HCT116 (cell line): ENCODE measurements at regions of chr17 and their contacts with region 1.

Region 1: DNA sequence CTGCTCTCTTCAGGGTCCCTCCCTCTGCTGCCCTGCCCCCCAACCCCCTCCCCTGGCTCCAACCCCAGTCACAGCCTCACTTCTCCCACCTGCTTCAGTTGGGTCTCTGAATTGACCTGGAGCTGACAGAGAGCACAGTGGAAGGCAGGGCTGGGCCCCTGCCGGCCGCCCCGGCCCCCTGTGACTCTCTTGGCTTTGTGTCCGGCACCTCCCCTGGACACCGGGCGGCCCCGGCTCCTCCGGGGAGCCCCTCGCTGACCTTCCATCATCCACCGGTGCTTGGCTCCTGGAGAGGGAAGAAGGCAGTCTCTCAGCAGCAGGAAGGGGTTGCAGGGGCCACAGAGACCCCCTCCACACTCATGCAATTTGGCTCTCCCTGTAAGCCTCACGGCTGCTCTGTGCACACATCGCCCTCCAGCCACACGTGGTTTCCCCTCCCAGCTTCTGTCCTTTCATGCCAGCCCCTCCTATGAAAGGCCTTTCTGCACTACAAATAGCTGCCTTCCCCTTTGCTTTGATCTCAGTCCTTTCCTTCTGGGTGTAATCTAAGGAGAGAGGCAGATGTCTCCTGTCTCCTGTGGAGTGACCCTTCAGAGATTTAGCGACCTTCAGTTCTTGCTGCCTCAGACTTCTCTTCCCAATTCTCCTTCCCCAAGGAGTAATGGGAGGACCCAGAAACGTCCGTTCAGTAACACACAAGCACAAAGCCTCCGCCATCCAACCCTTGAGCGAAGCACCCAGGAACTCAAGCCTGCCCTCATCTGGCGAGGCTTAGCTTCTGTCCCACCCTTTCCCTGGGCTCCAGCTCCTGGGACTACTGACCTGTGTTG is 8.3 kb downstream of the NKIRAS2 start:
- DNase-seq: peak; percentile 39
- ATAC-seq: peak; percentile 77
- H3K4me3 ChIP-seq: no peak overlapping the region
- H3K27ac ChIP-seq: no peak overlapping the region
- H3K4me1 ChIP-seq: peaks cover 15 to 32% of the 10 kb centered on the region in 2 experiments
- H3K27me3 ChIP-seq: no peaks in the 10 kb centered on the region
- CTCF ChIP-seq: peak; percentile 47 to 68 (median 56); a peak in 5 of 6 replicates
- POLR2A ChIP-seq: no peak
- RAD21 ChIP-seq: peak; percentile 36

Region 2: GRCh38 chr17:41403798-41404671 is 624.1 kb before region 1 on chr17:
- CTCF ChIA-PET with region 1: no interaction called
- POLR2A ChIA-PET with region 1: no interaction called
- RAD21 ChIA-PET with region 1: no interaction called
- intact Hi-C with region 1: no loop called
- DNase-seq: peak; percentile 99
- ATAC-seq: peak; percentile 84
- H3K4me3 ChIP-seq: no peak overlapping the region
- H3K27ac ChIP-seq: peak overlapping the region; percentile 78
- H3K4me1 ChIP-seq: peaks cover 43 to 73% of the 10 kb centered on the region in 2 experiments
- H3K27me3 ChIP-seq: no peaks in the 10 kb centered on the region
- CTCF ChIP-seq: no peak
- POLR2A ChIP-seq: no peak
- RAD21 ChIP-seq: peak; percentile 56

Region 3: DNA sequence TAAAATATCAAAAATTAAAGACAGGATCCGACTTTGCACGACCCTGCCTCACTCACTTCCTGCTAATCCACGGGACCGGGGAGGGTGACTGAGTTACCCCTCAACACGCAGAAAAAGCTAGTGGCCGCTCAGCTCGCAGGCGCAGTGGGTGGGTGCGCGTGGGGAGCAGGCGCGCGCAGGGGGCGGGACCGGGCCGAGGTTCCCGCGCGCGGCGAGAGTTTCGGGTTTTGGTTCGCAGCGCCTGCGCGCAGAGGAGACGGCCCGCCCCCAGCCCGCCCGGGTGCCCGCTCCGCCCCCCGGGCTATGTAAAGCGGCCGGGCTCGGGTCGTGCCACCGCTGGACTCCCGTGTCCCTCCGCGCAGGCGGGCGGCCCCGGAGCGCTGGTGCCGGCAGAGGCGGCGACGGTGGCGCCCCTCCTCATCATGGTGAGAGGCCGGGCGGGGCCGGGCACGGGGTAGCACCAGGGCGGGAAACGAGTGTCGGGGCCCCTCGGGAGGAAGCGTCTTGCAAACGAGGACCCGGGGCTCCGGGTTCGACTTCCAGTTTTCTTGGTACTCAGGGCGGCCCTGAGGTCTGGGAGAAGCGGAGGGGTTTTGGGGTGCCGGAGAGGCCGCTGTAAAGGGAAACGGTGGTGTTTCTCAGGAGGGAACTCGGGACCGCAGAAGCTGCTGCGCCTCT is 61.6 kb before region 1 on chr17 and contains the start of gene CNP:
- CTCF ChIA-PET with region 1: interaction called, 15 read pairs
- POLR2A ChIA-PET with region 1: no interaction called
- RAD21 ChIA-PET with region 1: no interaction called
- intact Hi-C with region 1: no loop called
- DNase-seq: peak; percentile 73
- ATAC-seq: peak; percentile 76
- H3K4me3 ChIP-seq: peak within 1 kb of the TSS; percentile 54 to 77
- H3K27ac ChIP-seq: peak within 1 kb of the TSS; percentile 73
- H3K4me1 ChIP-seq: peaks cover 7 to 22% of the 10 kb centered on the region in 2 experiments
- H3K27me3 ChIP-seq: no peaks in the 10 kb centered on the region
- CTCF ChIP-seq: no peak
- POLR2A ChIP-seq: peak; percentile 79
- RAD21 ChIP-seq: no peak
- total RNA-seq, gene CNP: 51.2 TPM

Region 4: DNA sequence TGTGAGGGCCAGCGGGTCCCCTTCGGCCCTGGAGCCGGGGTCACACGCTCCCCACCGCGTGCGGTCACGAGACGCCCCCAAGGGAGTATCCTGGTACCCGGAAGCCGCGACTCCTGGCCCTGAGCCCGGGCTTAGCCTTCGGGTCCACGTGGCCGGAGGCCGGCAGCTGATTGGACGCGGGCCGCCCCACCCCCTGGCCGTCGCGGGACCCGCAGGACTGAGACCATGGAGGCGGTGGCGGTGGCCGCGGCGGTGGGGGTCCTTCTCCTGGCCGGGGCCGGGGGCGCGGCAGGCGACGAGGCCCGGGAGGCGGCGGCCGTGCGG is 507.8 kb after region 1 on chr17 and contains the start of gene NAGLU:
- CTCF ChIA-PET with region 1: no interaction called
- POLR2A ChIA-PET with region 1: no interaction called
- RAD21 ChIA-PET with region 1: no interaction called
- intact Hi-C with region 1: no loop called
- DNase-seq: peak; percentile 63
- ATAC-seq: peak; percentile 84
- H3K4me3 ChIP-seq: peak within 1 kb of the TSS; percentile 71 to 90
- H3K27ac ChIP-seq: peak within 1 kb of the TSS; percentile 97
- H3K4me1 ChIP-seq: peaks cover 23 to 37% of the 10 kb centered on the region in 2 experiments
- H3K27me3 ChIP-seq: no peaks in the 10 kb centered on the region
- CTCF ChIP-seq: no peak
- POLR2A ChIP-seq: peak; percentile 31
- RAD21 ChIP-seq: no peak
- total RNA-seq, gene NAGLU: 17.7 TPM